ENCODE measurements at regions of chr6 and their contacts with region 1.

Region 1: DNA sequence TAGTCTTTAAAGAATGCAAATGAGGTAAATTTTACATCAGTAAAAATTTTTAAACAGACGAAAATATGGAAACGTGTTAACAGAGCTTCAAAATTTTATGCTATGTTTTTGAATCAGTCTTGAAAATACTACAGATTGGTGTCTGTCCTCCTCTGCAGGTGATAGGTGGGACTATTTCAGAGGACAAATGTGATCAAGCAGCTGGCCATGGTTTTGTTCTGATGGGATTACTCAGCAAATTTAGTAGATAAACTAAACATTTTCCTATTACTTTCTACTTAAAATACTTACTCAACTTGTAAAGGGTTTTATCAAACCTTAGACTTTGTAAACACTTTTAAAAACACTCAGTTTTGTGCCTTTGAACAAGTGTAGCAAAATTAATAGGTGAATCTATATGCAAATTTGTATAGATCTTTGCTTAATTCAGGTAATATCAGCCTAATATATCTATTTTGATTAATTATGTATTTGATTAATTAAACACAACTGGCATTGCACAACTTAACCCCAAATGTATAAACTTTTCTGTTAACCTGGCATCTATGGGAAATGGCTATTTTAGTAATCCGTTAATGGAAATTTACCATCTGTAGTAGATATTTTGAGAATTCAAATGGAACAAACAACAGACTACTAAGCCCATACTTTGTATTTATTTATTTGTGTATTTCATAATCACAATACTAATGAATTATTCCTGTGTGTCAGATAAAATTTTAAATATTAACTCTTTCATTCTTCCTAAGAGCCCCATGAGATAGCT is 22.5 kb downstream of the ADGRB3 start:
- DNase-seq: no peak
- H3K4me3 ChIP-seq: no peak overlapping the region
- H3K27ac ChIP-seq: no peak overlapping the region
- H3K4me1 ChIP-seq: no peaks in the 10 kb centered on the region
- H3K27me3 ChIP-seq: no peaks in the 10 kb centered on the region
- CTCF ChIP-seq: no peak
- EP300 ChIP-seq: no peak
- POLR2A ChIP-seq: no peak

Region 2: GRCh38 chr6:68497927-68498326 is 159.6 kb before region 1 on chr6:
- intact Hi-C with region 1: no loop called
- DNase-seq: no peak
- H3K4me3 ChIP-seq: no peak overlapping the region
- H3K27ac ChIP-seq: no peak overlapping the region
- H3K4me1 ChIP-seq: no peaks in the 10 kb centered on the region
- H3K27me3 ChIP-seq: no peaks in the 10 kb centered on the region
- CTCF ChIP-seq: no peak
- EP300 ChIP-seq: no peak
- POLR2A ChIP-seq: no peak

Region 3: GRCh38 chr6:68728159-68728979 is 70.8 kb after region 1 on chr6:
- intact Hi-C with region 1: no loop called
- DNase-seq: no peak
- H3K4me3 ChIP-seq: no peak overlapping the region
- H3K27ac ChIP-seq: no peak overlapping the region
- H3K4me1 ChIP-seq: no peaks in the 10 kb centered on the region
- H3K27me3 ChIP-seq: no peaks in the 10 kb centered on the region
- CTCF ChIP-seq: no peak
- EP300 ChIP-seq: no peak
- POLR2A ChIP-seq: no peak

Region 4: GRCh38 chr6:69096681-69097080 is 439.1 kb after region 1 on chr6:
- intact Hi-C with region 1: no loop called
- DNase-seq: no peak
- H3K4me3 ChIP-seq: no peak overlapping the region
- H3K27ac ChIP-seq: no peak overlapping the region
- H3K4me1 ChIP-seq: no peaks in the 10 kb centered on the region
- H3K27me3 ChIP-seq: no peaks in the 10 kb centered on the region
- CTCF ChIP-seq: no peak
- EP300 ChIP-seq: no peak
- POLR2A ChIP-seq: no peak

Region 5: DNA sequence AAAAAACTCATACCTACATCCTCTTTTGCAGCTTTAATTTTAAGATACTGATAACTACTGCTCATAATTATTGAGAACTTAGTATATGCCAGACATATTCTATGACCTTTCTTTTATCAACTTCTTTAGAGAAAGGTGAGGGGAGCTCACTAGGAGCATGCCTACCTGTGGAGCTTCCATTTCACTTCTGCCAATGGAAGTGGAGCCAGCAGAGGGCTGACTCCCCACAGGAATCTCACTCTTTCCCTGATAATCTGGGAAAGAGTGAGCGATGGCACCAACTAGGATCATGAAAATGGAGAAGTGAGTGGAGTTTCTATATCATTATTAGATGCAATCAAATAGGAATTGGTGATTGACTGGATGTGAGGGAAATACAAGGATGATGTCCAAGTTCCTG is 654.3 kb after region 1 on chr6:
- intact Hi-C with region 1: loop called in 1 of 4 experiments (anchors 5 kb)
- DNase-seq: no peak
- H3K4me3 ChIP-seq: no peak overlapping the region
- H3K27ac ChIP-seq: no peak overlapping the region
- H3K4me1 ChIP-seq: no peaks in the 10 kb centered on the region
- H3K27me3 ChIP-seq: no peaks in the 10 kb centered on the region
- CTCF ChIP-seq: no peak
- EP300 ChIP-seq: no peak
- POLR2A ChIP-seq: no peak

Measured in ovary (tissue), 10 donors.